Common myeloid progenitor, CD34-positive (primary cell): ENCODE measurements at regions of chr5 and their contacts with region 1.

Region 1: DNA sequence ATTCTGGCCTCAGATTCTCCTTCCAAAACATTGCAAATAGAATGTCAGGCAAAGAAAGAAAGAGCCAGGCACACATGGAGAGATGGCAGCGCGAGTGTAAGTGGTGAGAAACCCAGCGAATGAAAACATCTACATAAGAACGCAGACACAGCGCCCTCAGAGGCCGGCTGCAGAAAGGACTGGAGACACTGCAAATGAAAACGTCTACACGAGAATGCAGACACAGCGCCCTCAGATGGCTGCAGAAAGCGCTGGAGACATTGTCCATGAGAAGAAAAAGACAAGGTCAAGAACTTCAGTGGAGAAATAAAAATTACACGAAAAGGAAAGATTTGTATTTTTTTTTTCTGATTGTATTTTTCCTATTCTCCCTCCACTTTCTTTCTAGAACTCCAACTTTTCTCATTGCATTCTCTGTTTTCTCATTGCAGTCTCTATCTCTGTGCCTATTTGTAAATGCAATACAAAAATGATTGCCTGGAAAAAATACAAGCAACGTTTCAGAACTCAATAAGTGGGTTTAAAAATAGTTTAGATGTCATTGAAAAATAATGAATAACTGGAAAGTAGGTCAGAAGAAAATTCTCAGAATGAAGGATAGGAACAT is 117.9 kb upstream of the LPCAT1 start:
- DNase-seq: peak; percentile 89 to 93 (median 93)
- H3K4me3 ChIP-seq: no peak overlapping the region
- H3K27ac ChIP-seq: no peak overlapping the region
- H3K4me1 ChIP-seq: peaks cover 0 to 7% (median 3%) of the 10 kb centered on the region in 4 experiments
- H3K27me3 ChIP-seq: peaks cover 2 to 44% (median 15%) of the 10 kb centered on the region in 5 experiments

Region 2: GRCh38 chr5:1167728-1168709 is 473.6 kb before region 1 on chr5:
- CTCF ChIA-PET with region 1: interaction called, 23 read pairs
- POLR2A ChIA-PET with region 1: no interaction called
- DNase-seq: peak; percentile 69 to 82 (median 77)
- H3K4me3 ChIP-seq: peak overlapping the region in 4 of 7 experiments; percentile 23 to 54 (median 44)
- H3K27ac ChIP-seq: no peak overlapping the region
- H3K4me1 ChIP-seq: peaks cover 0 to 9% (median 2%) of the 10 kb centered on the region in 4 experiments
- H3K27me3 ChIP-seq: peaks cover 0 to 13% (median 4%) of the 10 kb centered on the region in 5 experiments

Region 3: GRCh38 chr5:1380011-1380817 is 261.4 kb before region 1 on chr5:
- CTCF ChIA-PET with region 1: interaction called, 11 read pairs
- POLR2A ChIA-PET with region 1: no interaction called
- DNase-seq: peak; percentile 44 to 79 (median 73)
- H3K4me3 ChIP-seq: peak overlapping the region in 2 of 7 experiments; percentile 36 to 42
- H3K27ac ChIP-seq: no peak overlapping the region
- H3K4me1 ChIP-seq: peaks cover 0 to 8% (median 2%) of the 10 kb centered on the region in 4 experiments
- H3K27me3 ChIP-seq: peaks cover 0 to 38% (median 10%) of the 10 kb centered on the region in 5 experiments

Region 4: GRCh38 chr5:1484730-1485578 is 156.7 kb before region 1 on chr5:
- CTCF ChIA-PET with region 1: interaction called, 24 read pairs
- POLR2A ChIA-PET with region 1: no interaction called
- DNase-seq: peak in 1 of 3 donors; percentile 26
- H3K4me3 ChIP-seq: no peak overlapping the region
- H3K27ac ChIP-seq: no peak overlapping the region
- H3K4me1 ChIP-seq: peaks cover 0 to 7% (median 0%) of the 10 kb centered on the region in 4 experiments
- H3K27me3 ChIP-seq: no peaks in the 10 kb centered on the region

Region 5: GRCh38 chr5:1652596-1653345 is 11.1 kb after region 1 on chr5:
- CTCF ChIA-PET with region 1: interaction called, 14 read pairs
- POLR2A ChIA-PET with region 1: interaction called, 3 read pairs
- DNase-seq: peak; percentile 53 to 82 (median 81)
- H3K4me3 ChIP-seq: peak overlapping the region in 3 of 7 experiments; percentile 33 to 59 (median 48)
- H3K27ac ChIP-seq: no peak overlapping the region
- H3K4me1 ChIP-seq: peaks cover 0 to 20% (median 13%) of the 10 kb centered on the region in 4 experiments
- H3K27me3 ChIP-seq: peaks cover 0 to 34% (median 9%) of the 10 kb centered on the region in 5 experiments